Ovary (tissue), 10 donors: ENCODE measurements at regions of chr15 and their contacts with region 1.

Region 1: GRCh38 chr15:51750792-51751685 is at the start of gene TMOD2:
- DNase-seq: peak; percentile 21 to 63 (median 54)
- H3K4me3 ChIP-seq: peak within 1 kb of the TSS; percentile 60
- H3K27ac ChIP-seq: peak within 1 kb of the TSS in 1 of 2 donors; percentile 43
- H3K4me1 ChIP-seq: no peaks in the 10 kb centered on the region
- H3K27me3 ChIP-seq: no peaks in the 10 kb centered on the region
- CTCF ChIP-seq: no peak
- EP300 ChIP-seq: no peak
- POLR2A ChIP-seq: no peak
- total RNA-seq, gene TMOD2: 11.5 to 15.7 (median 12.6) TPM

Region 2: DNA sequence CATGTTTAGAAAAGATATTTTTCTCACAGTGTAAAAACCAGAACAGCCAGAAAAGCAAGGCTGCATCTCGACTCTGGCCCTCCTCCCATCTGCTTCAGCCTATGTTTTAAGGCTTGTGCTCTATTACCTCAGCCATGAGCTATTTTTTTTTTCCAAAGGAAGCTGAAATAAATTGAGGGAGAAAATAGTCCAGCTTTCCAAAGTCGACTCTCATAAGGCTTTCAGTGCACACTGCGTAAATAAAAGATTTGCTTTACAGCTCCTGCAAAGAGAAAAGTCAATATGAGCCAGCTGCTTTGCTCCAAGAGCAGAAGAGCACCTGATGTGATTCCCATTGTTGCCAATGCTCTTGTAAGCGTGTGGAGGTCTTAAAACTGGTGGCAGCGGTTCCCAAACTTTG is 43.0 kb before region 1 on chr15:
- intact Hi-C with region 1: loop called in 1 of 4 experiments (anchors 5 kb)
- DNase-seq: peak in 1 of 5 donors; percentile 20
- H3K4me3 ChIP-seq: peak overlapping the region; percentile 14
- H3K27ac ChIP-seq: peak overlapping the region in 1 of 2 donors; percentile 61
- H3K4me1 ChIP-seq: peaks cover 4% of the 10 kb centered on the region
- H3K27me3 ChIP-seq: no peaks in the 10 kb centered on the region
- CTCF ChIP-seq: no peak
- EP300 ChIP-seq: no peak
- POLR2A ChIP-seq: no peak